ENCODE measurements at regions of chr14 and their contacts with region 1.

Region 1: GRCh38 chr14:66359500-66359899 is 126.7 kb upstream of the CCDC196 start:
- DNase-seq: peak in 7 of 14 experiments; percentile 1 to 77 (median 40)
- ATAC-seq: no peak
- H3K4me3 ChIP-seq: no peak overlapping the region
- H3K4me3 Mint-ChIP-seq: no peak overlapping the region
- H3K27ac ChIP-seq: no peak overlapping the region
- H3K27ac Mint-ChIP-seq: no peak overlapping the region
- H3K4me1 ChIP-seq: peaks cover 3% of the 10 kb centered on the region
- H3K4me1 Mint-ChIP-seq: no peaks in the 10 kb centered on the region
- H3K27me3 ChIP-seq: no peaks in the 10 kb centered on the region
- H3K27me3 Mint-ChIP-seq: no peaks in the 10 kb centered on the region
- CTCF ChIP-seq: peak; percentile 78

Region 2: DNA sequence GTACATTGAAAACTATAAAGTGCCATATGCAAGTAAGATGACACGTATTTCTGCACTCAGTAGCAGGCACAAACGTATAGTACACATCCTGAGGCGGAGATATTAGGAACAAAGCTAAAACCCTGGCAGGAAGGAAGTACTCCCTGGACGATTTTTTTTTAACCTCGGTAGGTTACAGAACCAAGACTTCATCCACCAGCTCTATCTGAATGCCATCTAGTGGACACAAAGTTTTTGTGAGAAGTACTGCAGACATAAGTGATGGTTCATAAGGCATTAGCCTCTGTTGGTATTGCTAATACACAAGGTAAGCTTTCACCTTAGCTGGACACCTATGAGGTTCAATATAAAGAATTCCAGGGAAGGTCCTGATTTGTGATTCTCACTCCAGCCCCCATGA is 43.7 kb after region 1 on chr14:
- CTCF ChIA-PET with region 1: interaction called, 11 read pairs
- POLR2A ChIA-PET with region 1: interaction called, 3 read pairs
- intact Hi-C with region 1: loop called in 1 of 2 experiments (anchors 2 kb)
- DNase-seq: peak in 3 of 14 experiments; percentile 37 to 41 (median 39)
- ATAC-seq: peak; percentile 29
- H3K4me3 ChIP-seq: no peak overlapping the region
- H3K4me3 Mint-ChIP-seq: no peak overlapping the region
- H3K27ac ChIP-seq: no peak overlapping the region
- H3K27ac Mint-ChIP-seq: no peak overlapping the region
- H3K4me1 ChIP-seq: no peaks in the 10 kb centered on the region
- H3K4me1 Mint-ChIP-seq: no peaks in the 10 kb centered on the region
- H3K27me3 ChIP-seq: no peaks in the 10 kb centered on the region
- H3K27me3 Mint-ChIP-seq: no peaks in the 10 kb centered on the region
- CTCF ChIP-seq: peak; percentile 28

Region 3: GRCh38 chr14:67111022-67111421 is 751.5 kb after region 1 on chr14:
- CTCF ChIA-PET with region 1: interaction called, 3 read pairs
- POLR2A ChIA-PET with region 1: no interaction called
- intact Hi-C with region 1: loop called in 1 of 2 experiments (anchors 5 kb)
- DNase-seq: no peak
- ATAC-seq: no peak
- H3K4me3 ChIP-seq: no peak overlapping the region
- H3K4me3 Mint-ChIP-seq: no peak overlapping the region
- H3K27ac ChIP-seq: no peak overlapping the region
- H3K27ac Mint-ChIP-seq: no peak overlapping the region
- H3K4me1 ChIP-seq: no peaks in the 10 kb centered on the region
- H3K4me1 Mint-ChIP-seq: no peaks in the 10 kb centered on the region
- H3K27me3 ChIP-seq: no peaks in the 10 kb centered on the region
- H3K27me3 Mint-ChIP-seq: no peaks in the 10 kb centered on the region
- CTCF ChIP-seq: no peak

Region 4: GRCh38 chr14:67335781-67336180 is 976.3 kb after region 1 on chr14:
- CTCF ChIA-PET with region 1: no interaction called
- POLR2A ChIA-PET with region 1: no interaction called
- intact Hi-C with region 1: loop called in 1 of 2 experiments (anchors 5 kb)
- DNase-seq: peak in 4 of 14 experiments; percentile 6 to 40 (median 25)
- ATAC-seq: no peak
- H3K4me3 ChIP-seq: no peak overlapping the region
- H3K4me3 Mint-ChIP-seq: no peak overlapping the region
- H3K27ac ChIP-seq: no peak overlapping the region
- H3K27ac Mint-ChIP-seq: peak overlapping the region; percentile 10
- H3K4me1 ChIP-seq: no peaks in the 10 kb centered on the region
- H3K4me1 Mint-ChIP-seq: no peaks in the 10 kb centered on the region
- H3K27me3 ChIP-seq: no peaks in the 10 kb centered on the region
- H3K27me3 Mint-ChIP-seq: no peaks in the 10 kb centered on the region
- CTCF ChIP-seq: peak; percentile 41

Measured in CD4-positive, alpha-beta T cell (primary cell).